CD4-positive, alpha-beta memory T cell (primary cell): ENCODE measurements at regions of chr1 and their contacts with region 1.

Region 1: DNA sequence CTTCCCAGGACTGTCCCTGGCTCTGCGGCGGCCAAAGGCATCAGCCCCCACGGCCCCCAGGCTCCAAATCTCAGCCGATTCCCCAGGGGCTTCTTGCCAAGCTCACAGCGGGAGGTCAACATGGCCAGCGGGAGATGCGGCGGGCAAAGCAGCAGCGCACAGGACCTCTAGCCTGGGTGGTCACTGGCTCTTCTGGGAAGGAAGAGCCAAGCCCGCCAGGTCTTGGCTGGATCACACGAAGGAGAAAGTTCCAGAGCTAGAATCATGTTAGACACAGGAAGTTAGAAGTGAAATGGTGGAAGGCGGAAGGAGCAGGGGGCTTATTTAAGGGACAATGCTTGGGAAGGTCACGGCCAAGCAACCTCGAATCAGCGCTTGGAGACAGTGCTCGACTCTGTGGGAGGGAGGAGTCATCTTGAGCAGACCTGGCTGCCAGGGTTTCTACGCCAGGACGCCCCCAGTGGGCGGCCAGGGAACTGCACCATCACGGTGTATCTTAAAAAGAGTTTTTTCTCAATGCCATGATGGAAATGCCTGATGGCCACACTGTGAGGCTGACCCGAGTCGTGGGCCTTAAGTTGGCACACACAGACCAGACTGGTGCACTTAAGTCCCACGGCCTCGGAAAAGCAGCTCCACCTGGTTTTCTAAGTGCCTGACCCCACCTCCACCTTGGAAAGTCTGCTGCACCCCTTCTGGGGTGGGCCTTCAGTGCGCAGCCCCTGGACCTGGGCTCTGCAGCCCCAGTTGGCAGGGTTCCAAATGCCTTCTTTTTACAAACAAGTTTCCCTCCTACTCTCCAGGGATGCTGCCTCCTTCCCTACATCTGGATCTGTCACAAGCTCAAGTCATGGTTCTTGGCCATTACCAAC is 29.3 kb downstream of the SLC66A1 start:
- DNase-seq: peak; percentile 64 to 71 (median 66)
- H3K4me3 ChIP-seq: no peak overlapping the region
- H3K4me3 Mint-ChIP-seq: peak overlapping the region in 1 of 8 donors; percentile 39
- H3K27ac ChIP-seq: no peak overlapping the region
- H3K27ac Mint-ChIP-seq: peak overlapping the region in 6 of 7 donors; percentile 62 to 95 (median 83)
- H3K4me1 ChIP-seq: no peaks in the 10 kb centered on the region
- H3K4me1 Mint-ChIP-seq: peaks cover 6 to 11% (median 7%) of the 10 kb centered on the region in 4 donors
- H3K27me3 ChIP-seq: no peaks in the 10 kb centered on the region
- H3K27me3 Mint-ChIP-seq: no peaks in the 10 kb centered on the region

Region 2: DNA sequence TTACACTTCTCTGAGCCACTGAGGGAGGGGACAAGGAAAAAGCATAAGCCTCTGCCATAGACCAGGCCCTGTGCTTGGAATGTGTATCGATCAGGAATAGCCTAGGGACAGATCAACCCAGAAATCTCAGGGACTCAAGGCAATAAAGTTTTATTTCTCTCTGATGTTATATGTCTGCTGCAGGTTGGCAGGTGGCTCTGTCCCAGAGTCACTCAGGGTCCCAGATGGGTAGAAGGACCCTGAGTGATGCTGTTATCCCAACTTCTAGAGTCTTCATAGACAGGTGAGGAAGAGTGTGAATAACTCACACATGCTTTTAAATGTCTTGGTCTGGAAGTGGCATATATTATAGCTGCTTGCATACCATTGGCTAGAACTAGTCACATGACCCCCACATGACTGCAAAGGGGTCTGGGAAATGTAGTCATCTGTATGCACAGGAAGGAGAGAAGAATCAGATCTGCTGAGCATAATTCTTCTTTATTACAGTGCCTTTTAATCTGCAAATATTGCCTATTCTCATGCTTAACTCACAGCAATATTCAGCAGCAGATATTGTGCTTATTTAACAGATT is 889.0 kb before region 1 on chr1:
- CTCF ChIA-PET with region 1: no interaction called
- POLR2A ChIA-PET with region 1: no interaction called
- intact Hi-C with region 1: no loop called
- DNase-seq: peak in 2 of 5 donors; percentile 6 to 19
- H3K4me3 ChIP-seq: no peak overlapping the region
- H3K4me3 Mint-ChIP-seq: no peak overlapping the region
- H3K27ac ChIP-seq: no peak overlapping the region
- H3K27ac Mint-ChIP-seq: no peak overlapping the region
- H3K4me1 ChIP-seq: no peaks in the 10 kb centered on the region
- H3K4me1 Mint-ChIP-seq: no peaks in the 10 kb centered on the region
- H3K27me3 ChIP-seq: no peaks in the 10 kb centered on the region
- H3K27me3 Mint-ChIP-seq: peaks cover 3 to 4% of the 10 kb centered on the region in 2 donors

Region 3: DNA sequence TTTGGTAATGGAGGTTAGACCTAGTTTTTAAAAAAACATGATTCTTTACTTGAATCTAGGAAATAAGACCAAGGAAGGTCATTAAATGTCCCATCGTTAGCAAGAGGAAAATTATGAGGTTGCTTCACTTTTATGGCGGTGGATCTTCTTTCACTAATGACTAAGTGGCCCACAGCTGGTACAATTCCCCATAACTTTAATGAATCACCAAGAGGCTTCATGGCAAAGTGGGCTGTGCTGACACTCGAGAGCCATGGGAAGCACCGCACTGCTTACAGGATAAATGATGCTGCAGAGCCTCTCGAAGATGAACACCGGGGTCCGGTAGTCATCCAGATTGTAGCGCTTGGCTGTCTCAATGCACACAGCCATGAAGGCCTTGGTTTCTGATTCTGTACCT is 240.2 kb before region 1 on chr1:
- CTCF ChIA-PET with region 1: no interaction called
- POLR2A ChIA-PET with region 1: no interaction called
- intact Hi-C with region 1: no loop called
- DNase-seq: no peak
- H3K4me3 ChIP-seq: no peak overlapping the region
- H3K4me3 Mint-ChIP-seq: no peak overlapping the region
- H3K27ac ChIP-seq: no peak overlapping the region
- H3K27ac Mint-ChIP-seq: no peak overlapping the region
- H3K4me1 ChIP-seq: no peaks in the 10 kb centered on the region
- H3K4me1 Mint-ChIP-seq: no peaks in the 10 kb centered on the region
- H3K27me3 ChIP-seq: no peaks in the 10 kb centered on the region
- H3K27me3 Mint-ChIP-seq: no peaks in the 10 kb centered on the region

Region 4: DNA sequence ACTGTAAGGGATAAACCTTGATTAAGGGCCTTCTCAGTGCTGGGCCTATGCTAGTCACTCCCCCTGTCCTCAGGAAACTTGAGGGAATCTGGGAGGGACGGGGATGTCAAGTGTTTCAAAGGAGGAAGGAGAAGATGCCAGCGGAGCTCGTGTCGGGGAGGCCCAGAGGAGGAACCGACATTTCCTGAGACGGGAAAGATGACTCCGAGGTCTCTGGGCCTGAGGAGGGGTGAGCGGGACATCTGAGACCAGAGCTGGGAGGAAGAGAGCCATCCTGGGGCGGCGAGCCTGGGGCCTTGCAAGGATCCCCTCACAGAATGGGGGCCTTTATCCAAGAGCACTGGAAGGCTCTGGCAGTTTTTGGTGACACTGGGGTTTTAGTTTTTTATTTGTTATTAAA is 19.0 kb before region 1 on chr1:
- CTCF ChIA-PET with region 1: no interaction called
- POLR2A ChIA-PET with region 1: no interaction called
- intact Hi-C with region 1: no loop called
- DNase-seq: no peak
- H3K4me3 ChIP-seq: no peak overlapping the region
- H3K4me3 Mint-ChIP-seq: no peak overlapping the region
- H3K27ac ChIP-seq: no peak overlapping the region
- H3K27ac Mint-ChIP-seq: peak overlapping the region in 2 of 7 donors; percentile 13 to 80
- H3K4me1 ChIP-seq: no peaks in the 10 kb centered on the region
- H3K4me1 Mint-ChIP-seq: peaks cover 0 to 5% (median 2%) of the 10 kb centered on the region in 4 donors
- H3K27me3 ChIP-seq: no peaks in the 10 kb centered on the region
- H3K27me3 Mint-ChIP-seq: no peaks in the 10 kb centered on the region

Region 5: DNA sequence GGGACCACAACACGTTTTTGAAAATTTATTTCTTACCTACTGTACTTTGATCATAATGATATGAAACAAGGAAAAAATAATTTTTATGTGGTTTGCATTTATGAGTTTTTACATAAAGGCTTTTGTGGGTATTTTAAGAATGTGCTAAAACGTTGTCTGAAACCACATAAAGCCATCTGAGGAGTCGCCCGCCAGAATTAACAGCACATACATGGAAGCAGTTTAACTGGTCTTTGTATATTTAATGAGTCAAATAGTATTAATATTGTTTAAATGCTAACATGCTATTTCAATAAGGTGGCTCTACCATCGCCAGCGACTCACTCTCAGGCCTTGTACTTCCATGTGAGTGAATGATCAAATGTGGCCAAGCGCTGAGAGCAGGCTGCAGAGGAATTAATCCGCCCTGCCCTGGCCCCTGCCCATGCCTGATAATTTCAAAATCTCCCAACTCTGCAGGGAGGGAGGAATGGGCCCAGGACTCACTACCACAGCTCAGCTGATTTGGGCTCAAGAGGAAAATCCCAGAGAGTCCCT is 20.2 kb after region 1 on chr1:
- CTCF ChIA-PET with region 1: interaction called, 14 read pairs
- POLR2A ChIA-PET with region 1: no interaction called
- intact Hi-C with region 1: no loop called
- DNase-seq: no peak
- H3K4me3 ChIP-seq: no peak overlapping the region
- H3K4me3 Mint-ChIP-seq: no peak overlapping the region
- H3K27ac ChIP-seq: no peak overlapping the region
- H3K27ac Mint-ChIP-seq: peak overlapping the region in 4 of 7 donors; percentile 38 to 67 (median 60)
- H3K4me1 ChIP-seq: peaks cover 20% of the 10 kb centered on the region
- H3K4me1 Mint-ChIP-seq: peaks cover 32 to 69% (median 47%) of the 10 kb centered on the region in 4 donors
- H3K27me3 ChIP-seq: no peaks in the 10 kb centered on the region
- H3K27me3 Mint-ChIP-seq: no peaks in the 10 kb centered on the region